Posterior vena cava (tissue), 2 donors: ENCODE measurements at regions of chr9 and their contacts with region 1.

Region 1: DNA sequence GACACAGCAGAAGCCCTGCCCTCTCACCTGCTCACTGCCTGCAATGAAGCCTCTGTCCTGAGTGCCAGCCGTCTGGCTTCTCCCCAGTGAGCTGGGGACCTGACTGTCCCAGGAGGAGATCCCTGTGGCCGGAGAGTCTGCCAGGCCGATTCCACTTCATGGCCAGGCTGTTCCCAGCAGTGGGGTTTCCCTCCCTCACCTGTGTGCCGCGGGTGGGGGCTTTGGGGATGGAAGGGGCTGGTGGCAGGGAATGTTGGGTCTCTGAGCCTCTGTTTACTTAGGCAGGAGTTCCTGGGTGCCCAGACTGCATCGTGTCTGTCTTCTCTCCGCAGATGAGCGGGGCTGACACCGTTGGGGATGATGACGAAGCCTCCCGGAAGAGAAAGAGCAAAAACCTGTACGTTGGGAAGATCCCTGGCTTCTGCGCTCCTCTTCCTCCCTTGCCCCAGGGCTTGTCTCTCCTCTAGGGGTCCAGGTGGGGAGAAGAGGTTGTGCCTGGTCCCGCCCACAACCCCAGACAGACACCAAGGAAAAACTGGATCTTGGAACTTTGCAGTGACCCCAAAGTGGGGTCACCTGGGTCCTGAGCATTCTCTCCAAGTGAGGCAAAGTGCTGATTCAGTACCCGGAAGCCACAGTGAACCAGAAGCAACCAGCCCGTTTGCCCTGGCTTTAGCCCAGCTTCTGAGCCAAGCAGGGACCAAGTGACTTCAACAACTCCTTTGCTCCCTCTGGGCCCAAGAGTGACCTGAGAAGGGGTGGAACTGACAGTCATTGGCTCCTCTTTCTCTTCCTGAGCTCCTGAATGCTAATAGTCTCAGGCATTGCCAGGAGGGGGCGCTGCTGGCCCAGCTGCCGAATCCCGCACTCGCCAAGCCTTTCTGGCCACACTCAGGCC is 127.7 kb downstream of the RGS3 start:
- DNase-seq: peak; percentile 94

Region 2: GRCh38 chr9:113275157-113276131 is 315.8 kb before region 1 on chr9 and contains the starts of genes CDC26 and PRPF4:
- intact Hi-C with region 1: loop called in 1 of 2 experiments (anchors 10 kb)
- DNase-seq: peak; percentile 99
- total RNA-seq, gene CDC26: 24.5 to 32.3 TPM
- total RNA-seq, gene PRPF4: 13.7 TPM

Region 3: DNA sequence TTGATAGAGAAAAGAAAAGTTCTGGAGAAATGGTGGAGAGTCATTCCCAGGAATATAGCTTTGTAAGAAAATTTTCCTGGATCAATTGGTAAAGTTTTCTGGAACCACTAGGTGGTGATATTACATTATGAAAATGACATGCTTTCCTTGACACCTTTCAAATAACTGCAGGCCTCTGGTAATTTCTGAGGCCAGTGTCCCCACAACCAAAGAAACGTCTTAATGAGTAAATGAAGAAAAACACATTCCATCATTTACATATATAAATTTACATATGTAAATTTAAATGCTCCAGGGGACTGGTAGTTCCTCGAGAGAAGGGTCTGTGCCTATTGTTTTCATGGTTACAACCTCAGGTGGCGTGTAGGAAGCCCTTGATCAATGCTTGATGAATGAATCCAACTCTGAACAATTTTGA is 144.9 kb before region 1 on chr9:
- intact Hi-C with region 1: loop called (anchors 2 to 5 kb)
- DNase-seq: no peak

Region 4: DNA sequence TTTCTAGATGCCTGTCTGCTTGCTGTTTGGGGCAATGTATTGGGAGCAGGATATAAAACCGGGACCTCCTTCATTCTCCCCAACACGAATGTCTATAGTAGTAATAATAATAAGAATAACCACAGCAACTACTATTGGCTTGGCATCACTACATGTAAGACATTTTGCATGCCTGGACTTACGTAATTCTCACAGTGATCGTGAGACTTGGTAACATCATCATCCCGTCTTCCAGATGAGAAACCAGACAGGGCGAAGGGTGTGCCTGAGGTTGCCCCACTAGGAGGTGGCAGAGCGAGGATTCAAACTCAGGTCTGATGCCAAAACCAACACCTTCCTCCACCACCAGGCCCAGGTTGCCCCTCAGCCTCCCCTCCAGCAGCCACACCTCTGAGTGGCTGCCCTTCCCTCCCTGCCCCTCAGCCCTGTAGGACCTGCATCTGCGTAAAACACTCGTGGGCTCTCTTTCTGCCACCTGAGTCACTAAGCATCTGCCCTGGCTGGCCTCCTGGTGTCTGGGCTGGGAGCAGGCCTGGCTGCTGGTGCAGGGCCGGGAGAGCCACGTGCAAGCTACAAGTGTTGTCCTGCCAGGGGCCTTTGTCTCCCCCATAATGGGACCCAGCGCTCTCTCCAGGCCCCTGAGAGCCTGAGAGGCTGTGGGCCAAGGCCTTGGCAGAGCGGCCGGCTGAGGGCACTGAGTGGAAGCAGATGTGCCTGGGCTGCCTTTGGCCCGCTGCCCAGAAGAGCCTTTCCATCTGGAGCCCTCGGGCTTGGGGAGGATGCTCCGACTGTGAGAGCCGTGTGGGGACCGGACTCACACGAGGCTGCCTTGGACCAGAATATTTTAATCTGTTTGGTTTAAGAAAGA is 57.6 kb after region 1 on chr9:
- intact Hi-C with region 1: loop called in 1 of 2 experiments (anchors 2 kb)
- DNase-seq: peak; percentile 80

Region 5: DNA sequence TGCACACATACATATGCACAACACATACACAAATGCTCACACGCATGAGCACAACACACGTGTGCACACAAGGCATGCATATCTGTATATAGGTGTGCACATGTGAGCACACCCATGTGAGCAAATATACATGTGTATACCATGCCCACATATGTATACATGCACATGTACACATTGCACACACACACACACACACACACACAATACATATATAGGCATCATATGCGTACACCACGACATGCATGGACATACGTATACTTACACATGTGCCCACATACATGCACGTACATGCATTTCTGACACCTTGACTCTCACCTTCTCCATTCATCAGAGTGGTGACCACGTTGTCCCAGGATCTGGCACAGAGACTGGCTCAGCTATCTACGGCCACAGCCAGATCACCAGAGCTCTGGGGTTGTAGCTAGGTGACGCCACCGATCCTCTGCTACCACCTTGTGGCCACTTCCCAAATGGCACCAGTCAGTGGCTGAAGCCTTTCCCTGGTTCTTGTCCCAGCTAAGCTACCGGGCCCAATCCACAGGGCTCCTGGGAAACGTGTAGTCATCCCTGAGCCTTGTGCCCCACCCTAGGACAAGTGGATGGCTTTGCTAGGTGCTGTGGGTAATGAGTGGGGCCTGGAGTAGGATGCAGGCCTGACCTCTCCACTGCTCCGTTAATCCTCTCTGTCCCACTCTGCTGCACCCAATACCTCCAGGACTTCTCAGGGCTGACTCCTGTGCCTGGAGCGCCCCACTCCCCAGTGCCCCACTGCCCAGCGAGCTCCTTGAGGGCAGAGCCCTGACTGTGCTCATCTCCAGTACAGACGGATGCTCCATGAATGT is 66.7 kb after region 1 on chr9:
- intact Hi-C with region 1: loop called (anchors 1 to 2 kb)
- DNase-seq: peak; percentile 95

Region 6: DNA sequence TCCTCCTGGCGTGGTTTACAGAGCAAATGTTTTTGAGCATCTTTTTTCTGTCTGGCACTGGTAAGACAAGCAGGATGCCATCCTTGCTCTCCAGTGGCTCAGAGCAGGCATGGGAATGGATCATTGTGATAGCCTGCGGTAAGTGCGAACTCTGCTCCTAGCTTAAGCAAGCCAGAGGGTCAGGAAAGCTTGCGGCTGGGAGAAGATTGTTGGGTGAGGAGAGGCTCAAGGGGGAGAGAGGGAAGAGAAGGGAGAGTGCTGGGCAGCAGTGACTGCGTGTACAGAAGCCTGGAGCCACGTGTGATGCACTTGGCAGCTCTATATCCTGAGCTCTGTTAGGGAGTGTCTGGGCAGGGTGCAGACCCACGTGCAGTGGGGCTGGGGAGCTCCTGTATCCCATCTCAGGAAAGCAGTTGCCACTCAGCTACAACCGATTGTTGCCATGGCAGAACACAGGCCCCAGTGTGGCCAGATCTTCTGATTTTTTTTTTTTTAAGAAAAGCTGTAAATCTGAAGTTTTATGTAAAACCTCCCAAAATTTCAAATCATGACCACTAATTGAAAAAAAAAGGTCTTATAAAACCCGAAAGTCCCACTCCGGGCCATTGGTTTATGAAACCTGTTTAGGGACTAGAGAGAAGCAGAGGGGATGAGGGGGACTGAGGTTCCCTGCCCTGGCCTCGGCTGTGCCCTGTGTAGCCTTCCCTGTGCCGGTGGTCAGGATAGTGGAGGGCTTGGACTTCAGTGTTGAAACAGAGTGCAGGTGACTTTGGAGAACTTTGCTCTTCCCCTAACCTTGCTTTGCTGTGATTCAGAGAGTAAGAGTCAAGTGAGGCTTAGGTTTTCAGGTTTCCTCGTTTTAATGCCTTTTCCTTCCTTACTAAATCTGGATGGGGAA is 352.1 kb after region 1 on chr9:
- intact Hi-C with region 1: no loop called
- DNase-seq: no peak

Region 7: GRCh38 chr9:114472765-114473446 is 881.7 kb after region 1 on chr9:
- intact Hi-C with region 1: loop called in 1 of 2 experiments (anchors 5 kb)
- DNase-seq: no peak